ENCODE measurements at regions of chr5 and their contacts with region 1.

Region 1: GRCh38 chr5:131548176-131548575 is 86.9 kb downstream of the RAPGEF6 start:
- DNase-seq: no peak
- H3K4me3 Mint-ChIP-seq: peak overlapping the region; percentile 86
- H3K27ac Mint-ChIP-seq: peak overlapping the region; percentile 92
- H3K4me1 Mint-ChIP-seq: peaks cover 70% of the 10 kb centered on the region
- H3K27me3 Mint-ChIP-seq: no peaks in the 10 kb centered on the region

Region 2: GRCh38 chr5:131281133-131281867 is 266.9 kb before region 1 on chr5:
- CTCF ChIA-PET with region 1: no interaction called
- POLR2A ChIA-PET with region 1: no interaction called
- intact Hi-C with region 1: loop called (anchors 1 kb)
- DNase-seq: no peak
- H3K4me3 Mint-ChIP-seq: peak overlapping the region; percentile 68
- H3K27ac Mint-ChIP-seq: peak overlapping the region; percentile 98
- H3K4me1 Mint-ChIP-seq: peaks cover 86% of the 10 kb centered on the region
- H3K27me3 Mint-ChIP-seq: no peaks in the 10 kb centered on the region

Region 3: DNA sequence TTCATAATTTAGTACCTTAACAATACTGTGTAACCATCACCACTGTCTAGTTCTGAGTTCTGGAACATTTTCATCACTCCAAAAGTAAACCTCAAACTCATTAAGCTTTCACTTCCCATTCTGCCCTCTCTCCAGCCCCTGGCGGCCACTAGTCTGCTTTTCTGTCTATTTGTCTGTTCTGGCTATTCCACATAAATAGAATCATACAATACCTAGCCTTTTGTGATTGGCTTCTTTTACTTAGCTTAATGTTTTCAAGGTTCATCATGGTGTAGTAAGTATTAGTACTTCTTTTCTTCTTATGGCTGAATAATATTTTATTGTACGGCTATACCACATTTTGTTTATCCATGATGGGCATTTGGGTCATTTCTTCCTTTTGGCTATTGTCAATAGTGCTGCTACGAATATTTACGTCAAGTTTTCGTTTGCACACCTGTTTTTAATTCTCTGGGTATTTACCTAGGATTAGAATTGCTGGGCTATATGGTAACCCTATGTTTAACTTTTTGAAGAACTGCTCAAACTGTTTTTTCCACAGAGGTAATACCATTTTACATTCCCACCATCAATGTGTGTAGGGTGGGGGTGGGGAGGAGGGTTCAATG is 51.7 kb before region 1 on chr5:
- CTCF ChIA-PET with region 1: no interaction called
- POLR2A ChIA-PET with region 1: no interaction called
- intact Hi-C with region 1: no loop called
- DNase-seq: peak; percentile 35
- H3K4me3 Mint-ChIP-seq: no peak overlapping the region
- H3K27ac Mint-ChIP-seq: no peak overlapping the region
- H3K4me1 Mint-ChIP-seq: peaks cover 28% of the 10 kb centered on the region
- H3K27me3 Mint-ChIP-seq: no peaks in the 10 kb centered on the region

Region 4: GRCh38 chr5:131514316-131515283 is 33.6 kb before region 1 on chr5:
- CTCF ChIA-PET with region 1: no interaction called
- POLR2A ChIA-PET with region 1: no interaction called
- intact Hi-C with region 1: loop called (anchors 1 kb)
- DNase-seq: no peak
- H3K4me3 Mint-ChIP-seq: peak overlapping the region; percentile 60
- H3K27ac Mint-ChIP-seq: peak overlapping the region; percentile 65
- H3K4me1 Mint-ChIP-seq: peaks cover 54% of the 10 kb centered on the region
- H3K27me3 Mint-ChIP-seq: no peaks in the 10 kb centered on the region

Region 5: DNA sequence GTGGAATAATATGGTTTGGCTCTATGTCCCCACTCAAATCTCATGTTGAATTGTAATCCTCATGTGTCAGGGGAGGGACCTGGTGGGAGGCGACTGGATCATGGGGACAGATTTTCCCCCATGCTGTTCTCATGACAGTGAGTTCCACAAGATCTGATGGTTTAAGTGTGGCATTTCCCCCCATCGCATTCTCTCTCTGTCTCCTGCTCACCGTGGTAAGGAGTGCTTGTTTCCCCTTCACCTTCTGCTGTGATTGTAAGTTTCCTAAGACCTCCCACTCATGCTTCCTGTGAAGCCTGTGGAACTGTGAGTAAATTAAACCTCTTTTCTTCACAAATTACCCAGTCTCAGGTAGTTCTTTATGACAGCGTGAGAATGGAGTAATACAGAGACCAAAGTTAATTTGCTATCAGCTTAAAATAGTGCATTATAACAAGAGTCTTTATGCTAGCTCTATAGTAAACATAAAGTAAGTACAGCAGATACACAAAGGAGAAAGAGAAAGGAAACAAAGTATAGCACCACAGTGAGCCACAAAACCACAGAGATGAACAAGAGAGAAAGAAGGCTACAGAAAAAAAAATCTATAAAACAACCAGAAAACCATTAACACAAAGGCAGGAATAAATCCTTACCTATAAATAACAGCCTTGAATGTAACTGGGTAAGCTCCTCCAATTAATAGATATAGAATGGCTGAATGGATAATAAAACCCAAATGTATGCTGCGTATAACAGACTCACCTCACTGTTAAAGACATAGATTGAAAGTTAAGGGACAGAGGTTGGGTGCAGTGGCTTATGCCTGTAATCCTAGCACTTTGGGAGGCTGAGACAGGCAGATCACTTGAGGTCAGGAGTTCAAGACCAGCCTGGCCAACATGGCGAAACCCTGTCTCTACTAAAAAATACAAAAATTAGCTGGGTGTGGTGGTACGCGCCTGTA is 47.2 kb after region 1 on chr5:
- CTCF ChIA-PET with region 1: no interaction called
- POLR2A ChIA-PET with region 1: no interaction called
- intact Hi-C with region 1: loop called (anchors 1 kb)
- DNase-seq: peak; percentile 33
- H3K4me3 Mint-ChIP-seq: no peak overlapping the region
- H3K27ac Mint-ChIP-seq: peak overlapping the region; percentile 52
- H3K4me1 Mint-ChIP-seq: peaks cover 57% of the 10 kb centered on the region
- H3K27me3 Mint-ChIP-seq: no peaks in the 10 kb centered on the region

Measured in activated CD4-positive, alpha-beta memory T cell treated with anti-CD3 and anti-CD28 coated beads for 36 hours (primary cell).